A673 (cell line): ENCODE measurements at regions of chrX and their contacts with region 1.

Region 1: DNA sequence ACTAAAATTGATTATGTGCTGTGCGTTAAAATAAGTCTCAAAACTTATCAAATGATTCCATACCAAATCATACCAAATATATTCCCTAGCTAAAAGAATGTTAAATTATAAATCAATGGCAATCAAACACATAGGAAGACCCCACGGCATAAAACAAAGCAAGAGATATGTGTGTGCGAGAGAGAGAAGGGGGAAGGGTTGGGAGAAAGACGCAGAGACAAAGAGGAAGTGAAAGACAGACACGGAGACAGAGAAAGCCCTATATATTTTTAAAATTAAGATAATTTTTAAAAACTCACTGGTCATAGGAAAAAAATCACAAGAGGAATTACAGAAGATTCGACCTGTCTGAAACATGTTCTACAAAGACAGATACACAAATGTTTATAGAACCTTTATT is 371.4 kb downstream of the NLGN4X start:
- DNase-seq: peak; percentile 64
- H3K4me3 ChIP-seq: peak overlapping the region; percentile 30
- H3K27ac ChIP-seq: peak overlapping the region; percentile 84
- H3K4me1 ChIP-seq: peaks cover 36% of the 10 kb centered on the region
- H3K27me3 ChIP-seq: no peaks in the 10 kb centered on the region
- CTCF ChIP-seq: no peak

Region 2: DNA sequence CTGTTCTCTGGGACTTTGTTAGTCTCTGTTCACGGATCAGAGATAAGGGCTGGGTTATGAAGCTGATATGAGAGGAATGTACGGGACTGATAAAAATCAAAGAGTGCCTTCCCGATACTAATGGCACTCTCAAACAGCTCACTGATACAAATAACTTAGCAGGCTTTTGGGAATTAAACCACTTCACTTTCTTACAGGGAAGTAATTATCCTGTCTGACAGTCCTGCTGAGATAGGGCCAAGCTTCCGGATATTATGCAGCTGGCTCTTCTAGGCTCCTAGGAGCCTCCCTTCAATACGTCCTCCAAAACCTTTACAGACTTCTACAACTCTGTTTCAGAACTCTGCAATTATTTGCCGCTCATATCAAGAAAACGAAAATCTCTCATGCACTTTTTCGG is 46.6 kb before region 1 on chrX:
- CTCF ChIA-PET with region 1: no interaction called
- POLR2A ChIA-PET with region 1: no interaction called
- intact Hi-C with region 1: loop called (anchors 5 kb)
- DNase-seq: peak; percentile 92
- H3K4me3 ChIP-seq: no peak overlapping the region
- H3K27ac ChIP-seq: no peak overlapping the region
- H3K4me1 ChIP-seq: peaks cover 21% of the 10 kb centered on the region
- H3K27me3 ChIP-seq: no peaks in the 10 kb centered on the region
- CTCF ChIP-seq: no peak